GM12878 (cell line): ENCODE measurements at regions of chr2 and their contacts with region 1.

Region 1: DNA sequence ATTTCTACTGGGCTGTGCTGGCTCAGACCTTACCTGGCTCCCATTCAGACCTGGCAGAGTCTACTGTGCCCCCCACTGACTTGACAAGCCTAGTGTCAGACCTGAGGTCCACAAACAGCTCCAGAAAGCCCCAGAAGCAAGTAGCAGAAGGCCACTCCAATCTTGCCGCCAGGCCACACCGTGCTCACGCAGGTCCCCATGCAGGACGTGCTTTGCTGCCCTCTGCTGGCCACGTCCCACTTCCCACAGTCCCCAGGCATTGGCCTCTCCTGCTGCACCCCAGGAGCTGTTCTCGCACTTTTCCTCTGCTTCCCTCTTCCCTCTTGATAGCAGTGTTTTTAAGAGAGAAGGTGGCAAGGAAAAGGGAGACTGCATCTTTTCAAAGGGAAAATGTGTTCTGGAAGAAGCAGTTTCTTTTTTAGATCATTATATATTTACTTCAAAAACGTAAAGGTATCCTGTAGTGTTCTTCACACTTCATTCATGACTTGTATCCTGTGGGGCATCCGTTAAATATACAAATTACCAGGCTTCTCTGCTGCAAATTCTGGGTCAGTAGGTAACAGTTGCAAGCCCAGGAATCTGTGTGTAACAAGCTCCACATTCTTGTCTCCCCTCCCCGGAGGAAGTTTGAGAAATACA is 81.4 kb upstream of the PAPOLG start:
- DNase-seq: peak; percentile 19
- ATAC-seq: peak; percentile 100
- H3K4me3 ChIP-seq: no peak overlapping the region
- H3K27ac ChIP-seq: no peak overlapping the region
- H3K4me1 ChIP-seq: peaks cover 3% of the 10 kb centered on the region; the same call in 1 of the 2 replicates
- H3K27me3 ChIP-seq: no peaks in the 10 kb centered on the region
- CTCF ChIP-seq: peak; percentile 95 to 98 (median 98)
- EP300 ChIP-seq: no peak
- POLR2A ChIP-seq: no peak
- RAD21 ChIP-seq: peak; percentile 69

Region 2: GRCh38 chr2:60413814-60414168 is 260.9 kb before region 1 on chr2:
- CTCF ChIA-PET with region 1: no interaction called
- POLR2A ChIA-PET with region 1: no interaction called
- RAD21 ChIA-PET with region 1: no interaction called
- SMC1A ChIA-PET with region 1: no interaction called
- in situ Hi-C with region 1: no loop called
- intact Hi-C with region 1: no loop called
- DNase-seq: peak; percentile 78
- ATAC-seq: peak; percentile 91
- H3K4me3 ChIP-seq: no peak overlapping the region
- H3K27ac ChIP-seq: peak overlapping the region; percentile 61
- H3K4me1 ChIP-seq: peaks cover 41% of the 10 kb centered on the region
- H3K27me3 ChIP-seq: no peaks in the 10 kb centered on the region
- CTCF ChIP-seq: no peak
- EP300 ChIP-seq: no peak
- POLR2A ChIP-seq: no peak
- RAD21 ChIP-seq: no peak

Region 3: DNA sequence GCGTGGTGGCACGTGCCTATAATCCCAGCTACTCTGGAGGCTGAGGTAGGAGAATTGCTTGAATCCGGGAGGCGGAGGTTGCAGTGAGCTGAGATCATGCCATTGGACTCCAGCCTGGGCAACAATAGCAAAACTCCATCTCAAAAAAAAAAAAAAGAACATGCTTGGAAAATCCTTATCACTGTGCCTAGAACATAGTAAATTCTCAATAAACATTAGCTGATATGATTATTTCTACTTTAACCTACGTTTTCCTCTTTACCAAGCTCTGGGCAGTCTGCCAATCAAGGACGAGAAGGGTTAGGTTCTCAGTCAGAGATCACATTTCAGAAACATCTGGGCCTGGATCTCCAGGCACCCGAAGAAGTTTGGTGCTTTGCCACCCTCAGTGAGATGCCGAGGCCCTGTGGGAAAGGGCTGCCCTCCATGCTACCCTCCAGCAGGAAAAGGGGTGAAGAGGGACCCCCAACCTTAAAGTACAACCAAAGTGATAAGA is 228.9 kb before region 1 on chr2:
- CTCF ChIA-PET with region 1: no interaction called
- POLR2A ChIA-PET with region 1: no interaction called
- RAD21 ChIA-PET with region 1: no interaction called
- SMC1A ChIA-PET with region 1: no interaction called
- in situ Hi-C with region 1: no loop called
- intact Hi-C with region 1: no loop called
- DNase-seq: no peak
- ATAC-seq: no peak
- H3K4me3 ChIP-seq: peak overlapping the region; percentile 21; the same call in 1 of the 2 replicates
- H3K27ac ChIP-seq: peak overlapping the region; percentile 94
- H3K4me1 ChIP-seq: peaks cover 55% of the 10 kb centered on the region
- H3K27me3 ChIP-seq: no peaks in the 10 kb centered on the region
- CTCF ChIP-seq: no peak
- EP300 ChIP-seq: no peak
- POLR2A ChIP-seq: no peak
- RAD21 ChIP-seq: no peak

Region 4: GRCh38 chr2:60641811-60642788 is 32.5 kb before region 1 on chr2:
- CTCF ChIA-PET with region 1: interaction called, 22 read pairs
- POLR2A ChIA-PET with region 1: no interaction called
- RAD21 ChIA-PET with region 1: interaction called, 3 read pairs
- SMC1A ChIA-PET with region 1: no interaction called
- in situ Hi-C with region 1: no loop called
- intact Hi-C with region 1: no loop called
- DNase-seq: no peak
- ATAC-seq: peak; percentile 93
- H3K4me3 ChIP-seq: no peak overlapping the region
- H3K27ac ChIP-seq: no peak overlapping the region
- H3K4me1 ChIP-seq: peaks cover 2% of the 10 kb centered on the region; the same call in 1 of the 2 replicates
- H3K27me3 ChIP-seq: peaks cover 0 to 5% of the 10 kb centered on the region in 2 experiments; a peak in 2 of 4 replicates
- CTCF ChIP-seq: peak; percentile 55 to 78 (median 69)
- EP300 ChIP-seq: no peak
- POLR2A ChIP-seq: no peak
- RAD21 ChIP-seq: peak; percentile 38; the same call in 1 of the 2 replicates

Region 5: DNA sequence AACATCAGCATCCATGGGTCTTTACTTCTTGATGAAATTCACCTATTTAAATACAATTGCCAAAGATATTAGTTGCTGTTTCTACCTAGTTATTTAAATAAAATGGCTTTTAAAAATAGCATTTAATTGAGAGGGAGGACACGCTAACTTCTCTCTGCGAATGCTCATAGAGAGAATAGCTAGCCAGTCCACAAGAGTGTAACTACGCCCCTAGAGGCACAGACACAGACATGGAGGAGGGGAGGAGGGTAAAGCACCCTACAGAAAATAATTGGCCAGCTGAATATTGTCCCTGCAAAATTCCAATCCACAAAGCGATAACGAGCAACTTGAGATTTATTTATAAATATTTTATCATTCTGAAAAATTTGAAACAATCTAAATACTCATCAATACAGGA is 15.6 kb before region 1 on chr2:
- CTCF ChIA-PET with region 1: interaction called, 15 read pairs
- POLR2A ChIA-PET with region 1: no interaction called
- RAD21 ChIA-PET with region 1: no interaction called
- SMC1A ChIA-PET with region 1: interaction called, 3 read pairs
- in situ Hi-C with region 1: no loop called
- intact Hi-C with region 1: no loop called
- DNase-seq: no peak
- ATAC-seq: peak; percentile 45; the same call in 2 of the 3 replicates
- H3K4me3 ChIP-seq: no peak overlapping the region
- H3K27ac ChIP-seq: no peak overlapping the region
- H3K4me1 ChIP-seq: no peaks in the 10 kb centered on the region
- H3K27me3 ChIP-seq: no peaks in the 10 kb centered on the region; a peak in 2 of 4 replicates
- CTCF ChIP-seq: peak in 2 of 3 experiments; percentile 26 to 31; a peak in 2 of 6 replicates
- EP300 ChIP-seq: no peak
- POLR2A ChIP-seq: no peak
- RAD21 ChIP-seq: no peak

Region 6: DNA sequence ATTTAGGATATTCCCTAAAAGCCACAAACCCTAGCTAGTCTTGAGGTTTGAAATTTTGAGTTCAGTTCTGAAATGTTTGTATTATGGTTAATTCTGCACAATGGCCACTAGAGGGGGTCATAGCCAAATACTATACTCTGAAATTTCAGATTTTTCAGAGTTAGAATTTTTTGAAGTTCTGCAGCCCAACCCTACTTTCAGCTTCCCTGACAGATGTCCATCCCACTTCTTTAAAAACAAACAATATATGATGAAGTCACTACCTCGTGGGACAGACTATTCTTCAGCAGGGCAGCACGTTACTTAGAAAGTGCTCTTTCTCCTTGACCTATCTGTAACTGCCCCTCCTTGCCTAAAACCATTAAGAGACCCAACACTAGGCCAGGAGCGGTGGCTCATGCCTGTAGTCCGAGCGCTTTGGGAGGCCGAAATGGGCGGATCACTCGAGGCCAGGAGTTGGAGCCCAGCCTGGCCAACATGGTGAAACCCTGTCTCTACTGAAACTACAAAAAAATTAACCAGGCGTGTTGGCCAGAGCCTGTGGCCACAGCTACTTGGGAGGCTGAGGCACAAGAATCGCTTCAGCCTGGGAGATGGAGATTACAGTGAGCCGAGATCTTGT is 33.2 kb after region 1 on chr2:
- CTCF ChIA-PET with region 1: interaction called, 16 read pairs
- POLR2A ChIA-PET with region 1: no interaction called
- RAD21 ChIA-PET with region 1: no interaction called
- SMC1A ChIA-PET with region 1: no interaction called
- in situ Hi-C with region 1: no loop called
- intact Hi-C with region 1: no loop called
- DNase-seq: peak; percentile 2
- ATAC-seq: peak; percentile 75
- H3K4me3 ChIP-seq: no peak overlapping the region
- H3K27ac ChIP-seq: no peak overlapping the region
- H3K4me1 ChIP-seq: no peaks in the 10 kb centered on the region
- H3K27me3 ChIP-seq: no peaks in the 10 kb centered on the region; a peak in 1 of 4 replicates
- CTCF ChIP-seq: peak; percentile 50 to 70 (median 67)
- EP300 ChIP-seq: no peak
- POLR2A ChIP-seq: no peak
- RAD21 ChIP-seq: peak; percentile 74